ENCODE measurements at regions of chr7 and their contacts with region 1.

Region 1: DNA sequence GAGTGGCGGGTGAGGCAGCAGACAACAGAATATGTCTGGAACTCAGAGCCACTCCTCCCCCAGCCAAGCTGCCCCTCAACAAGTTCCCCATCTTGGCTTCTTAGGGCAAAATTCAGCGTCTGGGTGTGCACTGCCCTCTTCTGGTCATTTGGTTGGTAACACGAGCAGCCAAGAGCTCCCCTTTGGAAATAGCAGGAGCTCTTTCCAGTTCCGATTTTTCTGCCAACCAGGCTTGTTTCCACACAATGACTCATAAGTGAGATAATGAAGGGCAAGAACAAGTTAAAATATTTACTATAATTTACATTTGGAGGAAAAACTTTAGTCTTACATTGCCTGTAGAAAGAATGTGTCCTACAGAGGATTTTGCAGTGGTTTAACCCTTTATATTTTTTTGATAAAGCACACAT is 70.5 kb downstream of the ADCYAP1R1 start:
- DNase-seq: peak; percentile 64
- ATAC-seq: peak; percentile 34
- H3K4me3 Mint-ChIP-seq: no peak overlapping the region
- H3K27ac Mint-ChIP-seq: no peak overlapping the region
- H3K4me1 Mint-ChIP-seq: no peaks in the 10 kb centered on the region
- H3K27me3 Mint-ChIP-seq: peaks cover 9% of the 10 kb centered on the region
- CTCF ChIP-seq: peak; percentile 74

Region 2: DNA sequence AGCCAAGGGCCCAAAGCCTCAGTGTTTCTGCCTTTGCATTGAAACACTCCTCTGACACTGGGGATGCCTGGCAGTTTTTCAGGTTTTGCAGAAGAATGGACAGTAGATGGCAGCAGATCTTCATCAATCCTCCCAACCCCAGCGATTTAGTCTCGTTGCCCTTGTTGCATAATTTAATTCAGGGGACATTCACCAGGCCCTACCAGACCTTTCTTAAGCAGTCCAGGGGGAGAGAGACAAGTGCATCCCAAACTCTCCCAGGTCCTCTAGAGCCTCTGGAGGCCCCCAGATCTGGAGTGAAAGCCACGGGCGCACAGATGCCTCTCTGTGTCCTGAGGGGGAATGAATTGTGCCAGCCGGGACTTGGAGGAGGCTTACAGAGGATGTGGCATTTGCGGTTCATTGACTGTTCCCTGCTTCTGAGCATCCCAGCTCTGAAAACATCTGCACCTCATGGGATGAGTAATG is 321.8 kb before region 1 on chr7:
- CTCF ChIA-PET with region 1: interaction called, 8 read pairs
- POLR2A ChIA-PET with region 1: interaction called, 4 read pairs
- intact Hi-C with region 1: loop called (anchors 5 kb)
- DNase-seq: peak; percentile 46
- ATAC-seq: peak; percentile 49
- H3K4me3 Mint-ChIP-seq: no peak overlapping the region
- H3K27ac Mint-ChIP-seq: no peak overlapping the region
- H3K4me1 Mint-ChIP-seq: peaks cover 10% of the 10 kb centered on the region
- H3K27me3 Mint-ChIP-seq: no peaks in the 10 kb centered on the region
- CTCF ChIP-seq: peak; percentile 60

Region 3: DNA sequence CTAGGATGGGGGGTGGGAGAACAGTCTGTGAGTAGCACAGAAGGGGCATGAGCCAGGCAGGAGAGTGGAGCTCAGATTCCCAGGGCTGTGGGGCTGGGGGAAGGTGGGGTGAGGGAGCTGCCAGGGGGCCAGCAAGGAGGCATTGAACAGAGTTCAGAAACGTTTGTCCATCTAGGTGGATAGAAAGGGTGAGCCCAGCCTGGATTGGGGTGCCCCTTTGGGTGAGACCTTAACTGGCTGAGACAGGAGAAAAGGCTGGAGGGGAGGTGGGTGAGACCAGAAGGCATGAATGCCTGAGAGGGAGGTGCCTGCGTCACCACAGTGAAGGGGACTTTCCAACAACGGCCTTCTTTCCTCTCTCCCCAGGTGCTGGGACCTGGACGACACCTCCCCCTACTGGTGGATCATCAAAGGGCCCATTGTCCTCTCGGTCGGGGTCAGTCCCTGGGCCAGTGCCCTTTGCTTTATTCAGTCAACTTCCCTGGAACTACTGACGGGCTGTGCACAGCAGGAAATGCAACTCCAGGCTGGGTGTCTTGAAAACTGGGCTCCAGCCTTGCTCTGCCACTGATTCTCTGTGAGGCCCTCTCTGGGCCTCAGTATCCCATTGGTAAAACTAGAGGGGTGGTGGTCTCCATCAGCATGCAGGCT is 147.9 kb before region 1 on chr7:
- CTCF ChIA-PET with region 1: interaction called, 33 read pairs
- POLR2A ChIA-PET with region 1: no interaction called
- intact Hi-C with region 1: no loop called
- DNase-seq: peak; percentile 84
- ATAC-seq: peak; percentile 97
- H3K4me3 Mint-ChIP-seq: no peak overlapping the region
- H3K27ac Mint-ChIP-seq: peak overlapping the region; percentile 18
- H3K4me1 Mint-ChIP-seq: no peaks in the 10 kb centered on the region
- H3K27me3 Mint-ChIP-seq: peaks cover 19% of the 10 kb centered on the region
- CTCF ChIP-seq: peak; percentile 71

Region 4: DNA sequence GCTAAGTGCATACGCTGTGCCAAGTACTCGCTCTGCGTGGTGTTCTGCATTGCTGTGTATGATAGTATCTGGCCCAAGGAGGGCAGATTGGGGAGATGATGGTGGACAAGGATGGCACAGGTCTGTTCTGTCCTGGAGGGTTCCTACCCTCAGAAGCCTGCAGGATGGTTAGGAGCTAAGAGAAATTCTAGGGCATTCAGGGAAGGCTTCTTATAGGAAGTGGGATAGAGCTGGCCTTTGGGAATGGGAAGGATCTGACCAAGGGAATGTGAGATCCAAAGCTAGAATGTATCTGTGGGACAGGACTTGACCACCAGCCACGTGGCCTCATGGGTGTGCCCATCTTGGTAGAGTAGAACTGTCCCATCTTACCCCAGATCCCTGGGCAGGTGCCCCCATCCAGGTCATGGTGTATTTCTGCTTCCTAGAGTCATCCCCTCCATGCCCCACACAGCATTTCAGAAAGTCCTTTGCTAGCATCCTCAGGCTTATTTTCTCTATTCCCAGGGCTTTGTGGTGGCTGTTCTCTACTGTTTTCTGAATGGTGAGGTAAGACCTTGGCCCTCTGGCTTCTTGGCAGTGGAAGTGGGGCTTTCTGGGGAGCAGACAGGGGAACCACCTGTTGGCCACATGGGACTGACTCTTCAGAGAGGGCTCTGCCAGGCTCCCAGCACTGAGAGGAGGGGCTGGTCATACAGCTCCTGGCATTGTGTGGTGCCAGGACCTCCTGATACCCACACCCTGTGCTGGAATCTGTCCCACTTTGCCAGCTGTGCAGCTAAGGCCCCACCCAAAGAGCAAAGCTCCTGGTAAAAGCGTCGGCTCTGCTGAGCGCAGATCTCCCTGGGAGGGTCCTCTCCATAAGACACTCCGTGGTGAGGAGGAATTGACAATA is 18.0 kb before region 1 on chr7:
- CTCF ChIA-PET with region 1: interaction called, 13 read pairs
- POLR2A ChIA-PET with region 1: no interaction called
- intact Hi-C with region 1: no loop called
- DNase-seq: no peak
- ATAC-seq: no peak
- H3K4me3 Mint-ChIP-seq: no peak overlapping the region
- H3K27ac Mint-ChIP-seq: no peak overlapping the region
- H3K4me1 Mint-ChIP-seq: no peaks in the 10 kb centered on the region
- H3K27me3 Mint-ChIP-seq: no peaks in the 10 kb centered on the region
- CTCF ChIP-seq: no peak

Region 5: GRCh38 chr7:31134246-31135188 is 11.9 kb after region 1 on chr7:
- CTCF ChIA-PET with region 1: interaction called, 90 read pairs
- POLR2A ChIA-PET with region 1: no interaction called
- intact Hi-C with region 1: no loop called
- DNase-seq: peak; percentile 62
- ATAC-seq: peak; percentile 77
- H3K4me3 Mint-ChIP-seq: no peak overlapping the region
- H3K27ac Mint-ChIP-seq: no peak overlapping the region
- H3K4me1 Mint-ChIP-seq: peaks cover 3% of the 10 kb centered on the region
- H3K27me3 Mint-ChIP-seq: peaks cover 1% of the 10 kb centered on the region
- CTCF ChIP-seq: peak; percentile 75